H1 (cell line): ENCODE measurements at regions of chr20 and their contacts with region 1.

Region 1: DNA sequence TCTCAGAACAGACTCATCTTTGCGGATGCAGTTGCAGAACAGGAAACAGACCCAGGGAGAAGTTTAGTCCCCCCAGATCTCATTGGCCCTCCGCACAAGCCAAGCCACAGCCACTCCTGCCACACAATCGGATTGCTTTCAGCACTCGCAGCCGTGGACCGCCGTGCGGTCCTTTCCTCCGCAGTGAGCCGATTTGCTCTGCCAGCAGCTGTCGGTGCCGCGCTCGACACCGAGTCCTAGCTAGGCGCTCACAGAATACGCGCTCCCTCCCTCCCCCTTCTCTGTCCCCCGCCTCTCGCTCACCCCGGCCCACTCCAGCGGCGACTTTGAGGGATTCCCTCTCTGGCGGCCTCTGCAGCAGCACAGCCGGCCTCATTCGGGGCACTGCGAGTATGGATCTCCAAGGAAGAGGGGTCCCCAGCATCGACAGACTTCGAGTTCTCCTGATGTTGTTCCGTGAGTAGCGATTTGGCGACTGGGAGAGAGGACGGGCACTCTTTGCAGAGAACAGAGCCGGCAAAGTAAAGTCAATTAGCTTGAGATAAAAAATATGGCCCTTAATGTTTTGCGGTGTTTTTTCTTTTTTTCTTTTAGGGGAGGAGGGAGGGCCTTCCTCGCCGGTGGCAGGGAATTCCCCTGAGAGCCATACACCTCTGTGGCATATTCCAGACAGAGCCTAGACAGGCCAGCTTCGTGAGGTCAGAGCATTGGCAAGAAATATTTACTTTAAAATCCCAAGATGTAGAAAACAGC is at the start of gene LAMP5:
- DNase-seq: peak in 1 of 2 experiments; percentile 80
- H3K4me3 ChIP-seq: peak within 1 kb of the TSS; percentile 42 to 63 (median 48); a peak in 7 of 8 replicates
- H3K27ac ChIP-seq: no peak within 1 kb of the TSS
- H3K4me1 ChIP-seq: peaks cover 2 to 28% (median 14%) of the 10 kb centered on the region in 4 experiments; a peak in 6 of 7 replicates
- H3K27me3 ChIP-seq: peaks cover 52 to 93% (median 73%) of the 10 kb centered on the region in 4 experiments
- CTCF ChIP-seq: no peak
- EP300 ChIP-seq: no peak
- POLR2A ChIP-seq: no peak
- RAD21 ChIP-seq: peak; percentile 1; a peak in 1 of 4 replicates
- total RNA-seq, gene LAMP5: 0.22 and 0.31 TPM in 2 replicates

Region 2: GRCh38 chr20:9602847-9603183 is 88.2 kb after region 1 on chr20:
- CTCF ChIA-PET with region 1: interaction called, 11 read pairs
- POLR2A ChIA-PET with region 1: no interaction called
- DNase-seq: no peak
- H3K4me3 ChIP-seq: no peak overlapping the region
- H3K27ac ChIP-seq: no peak overlapping the region
- H3K4me1 ChIP-seq: peaks cover 0 to 4% (median 0%) of the 10 kb centered on the region in 4 experiments; a peak in 1 of 7 replicates
- H3K27me3 ChIP-seq: no peaks in the 10 kb centered on the region; a peak in 1 of 7 replicates
- CTCF ChIP-seq: no peak
- EP300 ChIP-seq: no peak
- POLR2A ChIP-seq: no peak
- RAD21 ChIP-seq: no peak